PC-9 (cell line): ENCODE measurements at regions of chr7 and their contacts with region 1.

Region 1: GRCh38 chr7:23546897-23547572 is 15.3 kb upstream of the TRA2A start:
- DNase-seq: peak; percentile 85 to 89
- H3K4me3 ChIP-seq: no peak overlapping the region
- H3K27ac ChIP-seq: no peak overlapping the region
- H3K4me1 ChIP-seq: no peaks in the 10 kb centered on the region
- H3K27me3 ChIP-seq: no peaks in the 10 kb centered on the region
- CTCF ChIP-seq: peak; percentile 98

Region 2: DNA sequence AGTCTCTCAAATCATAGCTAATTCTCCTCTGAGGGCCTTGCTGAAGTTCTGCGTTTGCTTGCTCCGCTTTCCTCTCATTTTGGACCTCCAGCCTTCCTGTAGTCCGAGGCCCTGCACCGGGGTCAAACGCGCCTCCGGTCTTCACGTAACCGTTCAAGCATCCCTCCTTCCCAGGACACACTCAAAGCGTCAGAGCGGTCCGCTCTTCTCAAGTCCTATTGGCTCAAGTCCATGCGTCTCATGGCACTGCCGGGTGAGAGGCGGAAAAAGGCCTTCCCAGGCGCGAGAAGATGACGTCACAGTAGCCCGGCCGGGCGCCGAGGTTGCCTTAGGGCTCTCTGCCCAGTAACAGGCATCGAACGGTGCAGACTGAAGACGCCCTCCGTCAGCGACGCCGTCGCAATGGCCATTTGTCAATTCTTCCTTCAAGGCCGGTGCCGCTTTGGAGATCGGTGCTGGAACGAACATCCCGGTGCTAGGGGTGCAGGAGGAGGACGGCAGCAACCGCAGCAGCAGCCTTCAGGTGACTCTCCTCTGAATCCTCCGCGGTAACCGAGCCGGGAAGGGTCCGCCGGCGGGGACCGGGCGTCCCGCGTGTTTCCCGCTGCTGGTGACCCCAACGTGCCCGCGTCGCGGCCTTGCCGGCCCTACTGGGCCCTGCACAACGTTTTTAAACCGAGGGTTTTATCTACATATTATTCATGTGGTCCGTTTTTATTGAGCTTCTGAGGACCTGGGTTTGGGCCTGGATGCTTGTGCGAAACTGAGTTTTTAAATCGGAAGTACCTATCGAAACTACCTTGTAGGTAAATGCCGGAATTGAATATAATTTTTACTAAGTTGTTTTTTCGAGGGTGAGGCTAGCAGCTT is 365.1 kb before region 1 on chr7 and contains the start of gene NUP42:
- CTCF ChIA-PET with region 1: no interaction called
- POLR2A ChIA-PET with region 1: no interaction called
- intact Hi-C with region 1: loop called (anchors 1 kb)
- DNase-seq: peak; percentile 99 to 100
- H3K4me3 ChIP-seq: peak within 1 kb of the TSS; percentile 98
- H3K27ac ChIP-seq: peak within 1 kb of the TSS; percentile 87
- H3K4me1 ChIP-seq: peaks cover 27% of the 10 kb centered on the region
- H3K27me3 ChIP-seq: no peaks in the 10 kb centered on the region
- CTCF ChIP-seq: no peak
- total RNA-seq, gene NUP42: 41.3 and 51.3 TPM in 2 replicates

Region 3: GRCh38 chr7:23357190-23358093 is 189.6 kb before region 1 on chr7:
- CTCF ChIA-PET with region 1: interaction called, 9 read pairs
- POLR2A ChIA-PET with region 1: no interaction called
- intact Hi-C with region 1: loop called (anchors 1 kb)
- DNase-seq: peak; percentile 51 to 99
- H3K4me3 ChIP-seq: peak overlapping the region; percentile 28
- H3K27ac ChIP-seq: peak overlapping the region; percentile 63
- H3K4me1 ChIP-seq: peaks cover 51% of the 10 kb centered on the region
- H3K27me3 ChIP-seq: no peaks in the 10 kb centered on the region
- CTCF ChIP-seq: peak; percentile 83

Region 4: DNA sequence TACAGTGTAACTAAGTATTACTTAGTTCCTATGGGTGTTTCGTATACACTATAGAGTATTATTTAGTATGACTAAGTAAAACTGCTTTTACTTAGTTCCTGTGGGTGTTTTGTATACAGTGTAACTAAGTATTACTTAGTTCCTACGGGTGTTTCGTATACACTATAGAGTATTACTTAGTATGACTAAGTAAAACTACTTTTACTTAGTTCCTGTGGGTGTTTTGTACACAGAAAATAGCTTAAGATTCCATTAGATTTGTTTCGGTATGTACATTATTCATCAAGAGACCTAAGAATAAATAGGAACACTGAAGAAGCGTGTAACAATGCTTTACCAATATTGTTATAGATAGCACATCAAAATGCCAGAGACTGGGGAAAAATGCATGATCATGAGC is 101.7 kb before region 1 on chr7:
- CTCF ChIA-PET with region 1: no interaction called
- POLR2A ChIA-PET with region 1: no interaction called
- intact Hi-C with region 1: no loop called
- DNase-seq: no peak
- H3K4me3 ChIP-seq: no peak overlapping the region
- H3K27ac ChIP-seq: peak overlapping the region; percentile 5
- H3K4me1 ChIP-seq: no peaks in the 10 kb centered on the region
- H3K27me3 ChIP-seq: no peaks in the 10 kb centered on the region
- CTCF ChIP-seq: no peak

Region 5: GRCh38 chr7:23696916-23697441 is 149.9 kb after region 1 on chr7:
- CTCF ChIA-PET with region 1: no interaction called
- POLR2A ChIA-PET with region 1: no interaction called
- intact Hi-C with region 1: loop called (anchors 5 kb)
- DNase-seq: peak; percentile 50 to 69
- H3K4me3 ChIP-seq: no peak overlapping the region
- H3K27ac ChIP-seq: no peak overlapping the region
- H3K4me1 ChIP-seq: peaks cover under 1% of the 10 kb centered on the region; the same call in 1 of the 2 replicates
- H3K27me3 ChIP-seq: no peaks in the 10 kb centered on the region
- CTCF ChIP-seq: peak; percentile 93

Region 6: GRCh38 chr7:24216576-24217125 is 669.6 kb after region 1 on chr7:
- CTCF ChIA-PET with region 1: no interaction called
- POLR2A ChIA-PET with region 1: interaction called, 12 read pairs
- intact Hi-C with region 1: no loop called
- DNase-seq: peak in 1 of 2 experiments; percentile 65
- H3K4me3 ChIP-seq: no peak overlapping the region
- H3K27ac ChIP-seq: no peak overlapping the region
- H3K4me1 ChIP-seq: no peaks in the 10 kb centered on the region
- H3K27me3 ChIP-seq: no peaks in the 10 kb centered on the region
- CTCF ChIP-seq: no peak

Region 7: GRCh38 chr7:25098096-25099046 is 1551.3 kb after region 1 on chr7:
- CTCF ChIA-PET with region 1: no interaction called
- POLR2A ChIA-PET with region 1: no interaction called
- intact Hi-C with region 1: loop called (anchors 1 kb)
- DNase-seq: peak; percentile 64 to 76
- H3K4me3 ChIP-seq: peak overlapping the region; percentile 18; the same call in 1 of the 2 replicates
- H3K27ac ChIP-seq: no peak overlapping the region
- H3K4me1 ChIP-seq: peaks cover 11% of the 10 kb centered on the region; the same call in 1 of the 2 replicates
- H3K27me3 ChIP-seq: no peaks in the 10 kb centered on the region
- CTCF ChIP-seq: peak; percentile 99